Gastrocnemius medialis (tissue), 4 donors: ENCODE measurements at regions of chr13 and their contacts with region 1.

Region 1: GRCh38 chr13:99033814-99034213 is 56.0 kb upstream of the DOCK9 start:
- DNase-seq: no peak
- ATAC-seq: peak in 1 of 2 donors; percentile 58
- H3K4me3 ChIP-seq: no peak overlapping the region
- H3K27ac ChIP-seq: no peak overlapping the region
- H3K4me1 ChIP-seq: no peaks in the 10 kb centered on the region
- H3K27me3 ChIP-seq: no peaks in the 10 kb centered on the region
- CTCF ChIP-seq: peak; percentile 23 to 58 (median 38)
- POLR2A ChIP-seq: no peak

Region 2: GRCh38 chr13:98890186-98890585 is 143.6 kb before region 1 on chr13:
- in situ Hi-C with region 1: loop called in 1 of 4 experiments (anchors 10 kb)
- intact Hi-C with region 1: no loop called
- DNase-seq: peak; percentile 43 to 52
- ATAC-seq: peak; percentile 86 to 90
- H3K4me3 ChIP-seq: no peak overlapping the region
- H3K27ac ChIP-seq: peak overlapping the region in 1 of 4 donors; percentile 32
- H3K4me1 ChIP-seq: peaks cover 0 to 6% of the 10 kb centered on the region in 2 donors
- H3K27me3 ChIP-seq: no peaks in the 10 kb centered on the region
- CTCF ChIP-seq: no peak
- POLR2A ChIP-seq: no peak

Region 3: GRCh38 chr13:98909016-98909415 is 124.8 kb before region 1 on chr13:
- in situ Hi-C with region 1: no loop called
- intact Hi-C with region 1: loop called (anchors 5 kb)
- DNase-seq: no peak
- ATAC-seq: no peak
- H3K4me3 ChIP-seq: no peak overlapping the region
- H3K27ac ChIP-seq: peak overlapping the region; percentile 40 to 64 (median 60)
- H3K4me1 ChIP-seq: peaks cover 8 to 17% of the 10 kb centered on the region in 2 donors
- H3K27me3 ChIP-seq: no peaks in the 10 kb centered on the region
- CTCF ChIP-seq: no peak
- POLR2A ChIP-seq: no peak